IMR-90 (cell line): ENCODE measurements at regions of chr13 and their contacts with region 1.

Region 1: GRCh38 chr13:19681517-19681916 is 48.1 kb downstream of the MPHOSPH8 start:
- DNase-seq: peak; percentile 35
- ATAC-seq: no peak
- H3K4me3 ChIP-seq: no peak overlapping the region
- H3K27ac ChIP-seq: no peak overlapping the region
- H3K4me1 ChIP-seq: peaks cover 5% of the 10 kb centered on the region
- H3K27me3 ChIP-seq: no peaks in the 10 kb centered on the region
- CTCF ChIP-seq: no peak
- POLR2A ChIP-seq: no peak
- RAD21 ChIP-seq: no peak

Region 2: DNA sequence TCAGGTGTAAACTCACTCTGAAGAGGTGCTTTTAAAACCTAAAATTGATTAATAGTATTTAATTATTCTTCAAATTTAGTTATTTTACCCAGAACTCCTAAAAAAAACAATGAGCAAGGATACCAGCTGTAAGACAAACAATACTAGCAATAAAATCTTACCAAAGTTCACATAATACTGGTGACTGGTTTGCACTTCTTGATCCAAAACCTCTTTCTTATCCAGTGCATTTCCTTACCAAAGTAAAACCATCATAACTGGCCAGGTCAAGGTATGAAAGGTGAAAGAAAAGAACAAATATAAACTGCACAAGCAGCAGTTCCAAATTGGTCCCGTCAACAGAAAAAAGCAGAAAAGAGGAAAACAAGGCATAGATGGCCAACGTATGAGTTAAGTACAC is 38.5 kb after region 1 on chr13:
- CTCF ChIA-PET with region 1: interaction called, 3 read pairs
- POLR2A ChIA-PET with region 1: no interaction called
- dilution Hi-C with region 1: no loop called
- in situ Hi-C with region 1: no loop called
- intact Hi-C with region 1: loop called (anchors 5 kb)
- DNase-seq: no peak
- ATAC-seq: no peak
- H3K4me3 ChIP-seq: no peak overlapping the region
- H3K27ac ChIP-seq: no peak overlapping the region
- H3K4me1 ChIP-seq: peaks cover 2% of the 10 kb centered on the region
- H3K27me3 ChIP-seq: no peaks in the 10 kb centered on the region
- CTCF ChIP-seq: no peak
- POLR2A ChIP-seq: no peak
- RAD21 ChIP-seq: no peak

Region 3: GRCh38 chr13:19726611-19727010 is 45.1 kb after region 1 on chr13:
- CTCF ChIA-PET with region 1: interaction called, 3 read pairs
- POLR2A ChIA-PET with region 1: no interaction called
- dilution Hi-C with region 1: no loop called
- in situ Hi-C with region 1: loop called (anchors 5 kb)
- intact Hi-C with region 1: loop called (anchors 5 kb)
- DNase-seq: no peak
- ATAC-seq: no peak; the same call in 1 of the 2 replicates
- H3K4me3 ChIP-seq: no peak overlapping the region
- H3K27ac ChIP-seq: no peak overlapping the region
- H3K4me1 ChIP-seq: 0 out of 2 replicates have a peak, but pooled peaks cover under 1% of the 10 kb centered on the region
- H3K27me3 ChIP-seq: no peaks in the 10 kb centered on the region
- CTCF ChIP-seq: no peak
- POLR2A ChIP-seq: no peak
- RAD21 ChIP-seq: no peak

Region 4: DNA sequence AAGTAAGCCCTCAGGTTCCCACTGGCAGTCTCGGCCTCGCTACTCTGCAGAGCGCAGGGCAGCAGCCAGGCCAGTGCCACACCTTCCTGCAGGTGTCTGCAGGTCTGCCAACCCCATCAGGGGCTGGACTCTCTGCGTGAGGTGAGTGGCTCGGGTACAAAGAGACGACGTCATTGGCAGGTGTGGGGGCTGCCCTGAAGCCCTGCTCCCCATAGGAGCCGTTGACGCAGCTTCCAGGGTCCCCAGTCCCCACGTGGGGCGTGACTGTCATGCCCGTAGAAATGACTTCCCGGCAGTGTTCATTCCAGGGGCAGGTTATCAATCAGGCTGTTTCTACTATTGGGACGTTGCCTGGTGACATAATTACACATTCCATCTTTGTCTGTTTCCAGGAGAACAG is 565.9 kb after region 1 on chr13:
- CTCF ChIA-PET with region 1: no interaction called
- POLR2A ChIA-PET with region 1: no interaction called
- dilution Hi-C with region 1: no loop called
- in situ Hi-C with region 1: no loop called
- intact Hi-C with region 1: no loop called
- DNase-seq: no peak
- ATAC-seq: no peak
- H3K4me3 ChIP-seq: no peak overlapping the region
- H3K27ac ChIP-seq: no peak overlapping the region
- H3K4me1 ChIP-seq: no peaks in the 10 kb centered on the region
- H3K27me3 ChIP-seq: peaks cover 15% of the 10 kb centered on the region
- CTCF ChIP-seq: no peak
- POLR2A ChIP-seq: no peak
- RAD21 ChIP-seq: no peak